Transverse colon (tissue), 4 donors: ENCODE measurements at regions of chr20 and their contacts with region 1.

Region 1: GRCh38 chr20:48163527-48163926 is 378.2 kb upstream of the SULF2 start:
- DNase-seq: no peak
- H3K4me3 ChIP-seq: no peak overlapping the region
- H3K27ac ChIP-seq: no peak overlapping the region
- H3K4me1 ChIP-seq: no peaks in the 10 kb centered on the region
- H3K27me3 ChIP-seq: no peaks in the 10 kb centered on the region
- CTCF ChIP-seq: no peak
- EP300 ChIP-seq: no peak
- POLR2A ChIP-seq: no peak

Region 2: DNA sequence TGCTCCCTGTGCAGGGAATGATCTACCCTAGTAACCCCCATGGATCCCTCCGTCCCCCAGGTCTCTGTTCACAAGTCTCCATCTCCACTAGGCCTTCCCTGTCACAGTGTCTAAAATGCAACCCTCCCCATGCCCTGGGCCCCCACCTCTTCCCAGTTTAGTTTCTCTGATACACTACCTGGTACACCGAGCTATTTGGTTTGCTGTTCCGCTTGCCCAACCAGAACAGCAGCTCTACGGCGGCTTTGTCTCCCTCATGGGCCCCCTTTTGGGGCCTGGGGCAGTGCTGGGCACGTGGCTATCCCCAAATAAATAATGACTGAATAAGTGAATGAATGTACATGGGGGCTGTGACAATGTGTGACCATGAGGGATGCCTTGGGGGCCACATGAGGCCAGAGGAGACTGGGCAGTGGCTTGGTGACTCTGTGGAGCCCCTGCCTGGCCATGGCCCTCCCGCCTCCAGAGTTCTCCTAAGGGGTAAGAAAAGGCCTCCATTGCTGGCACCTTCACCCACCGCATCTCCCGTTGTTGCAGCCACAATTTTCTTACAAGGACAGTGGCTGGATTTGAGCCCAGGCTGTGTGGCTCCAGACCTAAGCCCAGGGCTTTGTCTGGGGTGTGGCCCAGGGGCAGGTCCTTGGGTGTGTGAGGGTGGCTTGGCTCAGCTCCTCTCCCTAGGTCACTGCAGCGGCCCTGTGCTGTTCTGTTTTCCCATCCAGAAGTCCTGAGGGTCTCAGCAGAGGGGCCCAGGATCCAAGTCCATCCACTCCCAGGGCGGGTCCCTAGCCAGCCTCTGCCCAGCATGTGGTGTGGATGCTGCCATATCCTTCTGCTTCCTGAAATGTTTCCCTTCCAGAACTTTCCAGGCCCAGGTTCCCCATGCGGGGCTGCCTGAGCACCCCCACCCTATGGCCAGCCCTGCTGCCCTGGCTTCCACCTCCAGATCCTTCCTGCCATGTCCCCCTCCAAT is 30.4 kb after region 1 on chr20:
- in situ Hi-C with region 1: no loop called
- intact Hi-C with region 1: loop called (anchors 1 kb)
- DNase-seq: peak; percentile 65
- H3K4me3 ChIP-seq: no peak overlapping the region
- H3K27ac ChIP-seq: no peak overlapping the region
- H3K4me1 ChIP-seq: peaks cover 7 to 34% (median 18%) of the 10 kb centered on the region in 4 donors
- H3K27me3 ChIP-seq: no peaks in the 10 kb centered on the region
- CTCF ChIP-seq: no peak
- EP300 ChIP-seq: no peak
- POLR2A ChIP-seq: no peak

Region 3: DNA sequence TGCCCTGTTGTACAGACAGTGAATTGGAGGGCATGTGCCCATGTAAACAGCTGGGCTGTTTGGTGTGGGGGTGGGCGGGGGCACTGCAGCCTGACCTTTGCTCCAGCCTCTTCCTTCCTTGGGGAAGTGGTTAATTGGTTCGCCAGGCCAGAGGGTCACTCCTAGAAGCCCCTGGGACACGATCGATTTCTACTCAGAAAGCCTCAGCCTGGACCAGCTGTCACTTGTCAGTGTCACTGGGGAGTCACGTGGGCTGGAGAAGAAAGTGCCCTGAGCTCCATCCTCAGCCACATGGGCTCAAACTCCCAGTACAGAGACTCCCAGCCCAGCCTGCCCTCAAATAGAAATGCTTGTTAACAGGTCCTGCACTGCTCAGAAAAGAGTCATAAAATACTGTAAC is 45.6 kb after region 1 on chr20:
- in situ Hi-C with region 1: no loop called
- intact Hi-C with region 1: no loop called
- DNase-seq: no peak
- H3K4me3 ChIP-seq: no peak overlapping the region
- H3K27ac ChIP-seq: no peak overlapping the region
- H3K4me1 ChIP-seq: no peaks in the 10 kb centered on the region
- H3K27me3 ChIP-seq: no peaks in the 10 kb centered on the region
- CTCF ChIP-seq: no peak
- EP300 ChIP-seq: no peak
- POLR2A ChIP-seq: no peak

Region 4: GRCh38 chr20:48556956-48557355 is 393.4 kb after region 1 on chr20:
- in situ Hi-C with region 1: no loop called
- intact Hi-C with region 1: no loop called
- DNase-seq: no peak
- H3K4me3 ChIP-seq: no peak overlapping the region
- H3K27ac ChIP-seq: no peak overlapping the region
- H3K4me1 ChIP-seq: no peaks in the 10 kb centered on the region
- H3K27me3 ChIP-seq: no peaks in the 10 kb centered on the region
- CTCF ChIP-seq: no peak
- EP300 ChIP-seq: no peak
- POLR2A ChIP-seq: no peak